Heart right ventricle (tissue), 16 donors: ENCODE measurements at regions of chr12 and their contacts with region 1.

Region 1: DNA sequence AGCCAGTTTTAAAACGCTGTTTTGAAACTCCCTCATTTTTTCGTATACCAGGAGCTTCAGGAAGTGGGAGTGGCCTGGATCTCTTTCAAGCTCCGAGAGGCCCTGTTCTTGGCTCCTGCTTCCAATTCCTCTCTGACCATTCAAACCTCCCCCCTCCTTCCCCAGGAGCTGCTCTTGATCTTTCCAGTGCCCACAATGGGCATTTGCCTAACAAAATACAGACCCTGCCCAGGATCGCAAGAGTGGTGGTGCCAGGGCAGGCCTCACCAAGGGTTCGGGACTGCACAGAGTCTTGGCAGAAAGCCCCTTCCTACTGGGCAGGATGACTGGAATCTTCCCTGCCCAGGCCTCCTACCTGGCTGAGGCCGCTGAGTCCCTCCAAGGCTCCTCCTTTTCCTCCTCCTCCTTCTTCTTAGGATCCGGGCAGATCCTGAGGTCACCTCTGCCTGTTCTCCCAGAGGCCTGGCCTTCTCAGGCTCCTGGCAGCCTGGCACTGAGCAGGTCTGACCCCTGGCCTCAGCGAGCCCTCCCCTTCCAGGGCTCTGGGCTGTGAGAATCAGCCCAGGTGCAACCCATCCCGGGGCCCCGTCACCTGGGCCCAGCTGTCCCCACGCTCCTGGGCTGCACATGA is 46.9 kb upstream of the NOS1 start:
- DNase-seq: peak in 1 of 2 donors; percentile 31
- ATAC-seq: peak in 7 of 8 donors; percentile 50 to 73 (median 60)
- H3K4me3 ChIP-seq: no peak overlapping the region
- H3K27ac ChIP-seq: no peak overlapping the region
- H3K4me1 ChIP-seq: peaks cover 0 to 12% (median 6%) of the 10 kb centered on the region in 9 donors
- H3K27me3 ChIP-seq: peaks cover 0 to 11% (median 0%) of the 10 kb centered on the region in 7 donors
- CTCF ChIP-seq: no peak

Region 2: DNA sequence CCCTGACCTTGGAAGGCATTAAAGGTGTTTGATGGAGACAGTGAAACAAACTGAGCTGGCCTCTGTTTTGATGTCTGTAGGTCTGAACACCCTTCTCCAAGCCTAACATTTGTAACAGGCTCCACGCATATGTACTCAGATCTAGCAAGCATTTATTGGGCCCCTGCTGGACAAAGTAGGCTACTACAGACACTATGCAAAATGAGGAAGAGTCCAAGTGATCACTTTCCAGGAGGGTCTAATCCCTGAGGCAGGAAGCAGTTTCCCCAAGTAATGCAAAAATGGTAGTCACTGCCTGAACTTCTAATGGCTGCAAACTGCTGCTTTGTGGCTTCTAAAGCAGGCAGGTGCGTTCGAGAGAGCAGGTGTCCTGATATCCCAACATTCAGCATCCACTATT is 1536.6 kb before region 1 on chr12:
- intact Hi-C with region 1: loop called in 1 of 10 experiments (anchors 5 kb)
- DNase-seq: no peak
- ATAC-seq: peak in 3 of 8 donors; percentile 23 to 46 (median 41)
- H3K4me3 ChIP-seq: no peak overlapping the region
- H3K27ac ChIP-seq: no peak overlapping the region
- H3K4me1 ChIP-seq: peaks cover 0 to 18% (median 3%) of the 10 kb centered on the region in 9 donors
- H3K27me3 ChIP-seq: peaks cover 0 to 27% (median 0%) of the 10 kb centered on the region in 7 donors
- CTCF ChIP-seq: peak; percentile 32 to 61 (median 51)